ENCODE measurements at regions of chr12 and their contacts with region 1.

Region 1: DNA sequence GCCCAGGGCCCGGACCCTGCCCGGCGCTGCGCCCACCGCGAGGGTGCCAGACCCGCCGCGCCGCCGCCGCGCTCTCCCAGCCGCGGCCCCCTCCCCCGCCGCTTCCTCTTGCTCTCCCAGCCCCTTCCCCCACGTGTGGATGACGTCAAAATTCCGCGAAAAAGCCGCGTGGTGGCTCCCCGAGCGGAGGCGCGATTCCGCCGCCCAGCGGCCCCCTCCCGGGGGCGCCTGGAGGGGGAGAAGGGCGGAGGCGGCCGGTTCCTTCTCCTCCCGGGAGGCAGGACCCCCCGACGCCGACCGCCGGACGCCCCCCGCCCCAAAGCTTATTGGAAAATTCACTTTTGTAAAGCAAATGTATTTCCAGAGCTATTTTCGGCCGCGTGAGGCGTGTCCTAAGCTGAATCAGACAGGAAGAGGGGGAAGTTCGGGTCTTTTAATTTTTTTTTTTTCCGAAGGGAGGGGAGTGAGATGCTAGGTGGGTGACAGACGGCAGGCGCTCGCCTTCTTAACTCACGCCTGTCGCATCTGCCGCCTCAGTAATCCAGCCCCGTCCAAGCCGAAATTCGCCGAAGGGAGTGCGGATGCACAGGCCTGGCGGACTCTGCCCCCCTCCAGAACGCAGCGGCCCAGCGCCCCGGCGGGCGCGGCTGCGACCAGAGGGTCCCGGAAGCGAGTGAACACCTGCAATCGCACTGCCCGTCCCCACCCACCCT is 4.1 kb upstream of the CCND2 start:
- DNase-seq: peak; percentile 96
- ATAC-seq: peak; percentile 42
- H3K4me3 ChIP-seq: peak overlapping the region; percentile 64 to 90 (median 77)
- H3K4me3 Mint-ChIP-seq: peak overlapping the region; percentile 99
- H3K27ac ChIP-seq: peak overlapping the region; percentile 97 to 99
- H3K27ac Mint-ChIP-seq: peak overlapping the region; percentile 99
- H3K4me1 ChIP-seq: peaks cover 19 to 39% of the 10 kb centered on the region in 2 donors
- H3K4me1 Mint-ChIP-seq: peaks cover 28% of the 10 kb centered on the region
- H3K27me3 ChIP-seq: no peaks in the 10 kb centered on the region
- H3K27me3 Mint-ChIP-seq: no peaks in the 10 kb centered on the region
- CTCF ChIP-seq: no peak

Region 2: DNA sequence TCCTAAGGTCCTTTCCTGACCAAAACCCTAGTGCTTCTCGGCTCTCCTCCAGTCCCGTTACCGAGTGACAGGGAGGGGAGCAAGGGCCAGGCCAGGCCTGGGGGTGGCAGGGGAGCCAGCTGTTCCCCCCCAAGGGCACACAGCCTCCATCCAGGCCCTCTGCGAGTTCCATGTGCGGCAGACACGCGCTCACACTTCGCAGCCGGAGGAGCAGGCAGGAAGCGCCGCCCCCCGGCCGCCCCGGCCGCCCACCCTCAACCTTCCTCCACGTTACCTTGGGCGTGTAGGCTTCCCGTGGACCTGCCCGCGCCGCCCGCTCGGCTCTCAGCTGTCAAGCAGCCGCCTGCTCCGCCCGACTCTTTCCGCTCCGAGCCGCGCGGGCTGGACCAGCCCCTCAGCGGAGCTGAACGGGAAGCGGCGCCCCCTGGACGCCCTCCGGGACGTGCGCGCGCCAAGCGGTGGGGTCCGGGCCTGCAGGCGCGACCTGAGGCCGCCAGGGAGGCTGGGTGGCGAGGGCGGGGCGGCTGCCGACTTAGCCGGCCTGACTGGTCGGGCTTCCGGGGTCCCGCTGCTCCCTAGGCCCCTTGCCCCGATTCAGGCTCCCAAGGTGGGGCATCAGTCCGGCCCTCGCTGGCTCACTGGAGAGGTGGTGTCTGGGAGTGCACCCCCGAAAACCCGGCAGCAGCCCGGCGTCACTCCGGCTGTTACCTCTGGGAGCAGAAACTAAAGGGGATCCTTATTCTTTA is 516.5 kb before region 1 on chr12 and contains the start of gene CRACR2A:
- CTCF ChIA-PET with region 1: no interaction called
- POLR2A ChIA-PET with region 1: no interaction called
- intact Hi-C with region 1: loop called (anchors 5 kb)
- DNase-seq: peak; percentile 89
- ATAC-seq: peak; percentile 88
- H3K4me3 ChIP-seq: peak within 1 kb of the TSS; percentile 68 to 98 (median 82)
- H3K4me3 Mint-ChIP-seq: peak within 1 kb of the TSS; percentile 92
- H3K27ac ChIP-seq: peak within 1 kb of the TSS; percentile 92 to 95
- H3K27ac Mint-ChIP-seq: peak within 1 kb of the TSS; percentile 91
- H3K4me1 ChIP-seq: peaks cover 20 to 29% of the 10 kb centered on the region in 2 donors
- H3K4me1 Mint-ChIP-seq: peaks cover 34% of the 10 kb centered on the region
- H3K27me3 ChIP-seq: no peaks in the 10 kb centered on the region
- H3K27me3 Mint-ChIP-seq: no peaks in the 10 kb centered on the region
- CTCF ChIP-seq: peak; percentile 86
- total RNA-seq, gene CRACR2A: 26.1 and 26.8 TPM in 2 replicates

Region 3: GRCh38 chr12:3998968-3999826 is 270.2 kb before region 1 on chr12:
- CTCF ChIA-PET with region 1: interaction called, 293 read pairs
- POLR2A ChIA-PET with region 1: interaction called, 5 read pairs
- intact Hi-C with region 1: no loop called
- DNase-seq: no peak
- ATAC-seq: no peak
- H3K4me3 ChIP-seq: no peak overlapping the region
- H3K4me3 Mint-ChIP-seq: no peak overlapping the region
- H3K27ac ChIP-seq: no peak overlapping the region
- H3K27ac Mint-ChIP-seq: no peak overlapping the region
- H3K4me1 ChIP-seq: peaks cover 4 to 7% of the 10 kb centered on the region in 2 donors
- H3K4me1 Mint-ChIP-seq: peaks cover 4% of the 10 kb centered on the region
- H3K27me3 ChIP-seq: peaks cover 0 to 3% (median under 1%) of the 10 kb centered on the region in 4 experiments
- H3K27me3 Mint-ChIP-seq: peaks cover 4% of the 10 kb centered on the region
- CTCF ChIP-seq: no peak

Region 4: GRCh38 chr12:4118017-4118510 is 151.4 kb before region 1 on chr12:
- CTCF ChIA-PET with region 1: interaction called, 42 read pairs
- POLR2A ChIA-PET with region 1: interaction called, 28 read pairs
- intact Hi-C with region 1: loop called (anchors 1 kb)
- DNase-seq: peak; percentile 90
- ATAC-seq: peak; percentile 90
- H3K4me3 ChIP-seq: peak overlapping the region in 3 of 5 experiments; percentile 21 to 56 (median 34)
- H3K4me3 Mint-ChIP-seq: peak overlapping the region; percentile 78
- H3K27ac ChIP-seq: peak overlapping the region; percentile 47 to 59
- H3K27ac Mint-ChIP-seq: peak overlapping the region; percentile 85
- H3K4me1 ChIP-seq: peaks cover 49 to 51% of the 10 kb centered on the region in 2 donors
- H3K4me1 Mint-ChIP-seq: peaks cover 54% of the 10 kb centered on the region
- H3K27me3 ChIP-seq: peaks cover 0 to 1% (median 0%) of the 10 kb centered on the region in 4 experiments
- H3K27me3 Mint-ChIP-seq: no peaks in the 10 kb centered on the region
- CTCF ChIP-seq: no peak

Region 5: DNA sequence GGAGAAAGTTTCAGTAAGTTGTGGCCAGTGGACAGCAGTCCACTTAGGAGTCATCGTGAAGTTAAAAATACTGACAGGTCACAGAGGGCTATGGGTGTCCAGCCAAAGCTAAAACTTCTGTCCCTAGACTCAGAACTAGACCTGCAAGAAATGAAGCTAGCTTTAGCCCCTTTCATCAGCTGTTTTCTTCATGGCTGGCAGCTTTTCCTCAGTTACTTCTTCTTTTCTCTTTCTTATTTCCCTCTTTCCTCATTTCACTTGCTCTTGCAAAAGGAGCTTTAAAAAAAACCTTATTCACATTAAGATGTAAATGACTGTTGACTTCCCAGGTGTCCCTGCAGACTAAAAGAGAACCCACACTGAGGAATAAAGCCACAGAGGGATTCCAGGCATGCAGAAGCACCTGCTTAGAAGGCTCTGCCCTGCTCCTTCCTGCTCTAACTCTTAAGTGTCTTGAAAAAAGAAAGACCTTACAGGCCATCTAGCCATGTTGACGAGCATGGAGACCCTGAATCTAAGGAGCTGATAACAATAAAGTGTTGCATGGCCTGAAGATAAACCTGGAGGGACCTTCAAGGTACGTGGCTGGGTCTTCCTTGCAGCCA is 65.6 kb before region 1 on chr12:
- CTCF ChIA-PET with region 1: interaction called, 3 read pairs
- POLR2A ChIA-PET with region 1: interaction called, 8 read pairs
- intact Hi-C with region 1: loop called (anchors 5 kb)
- DNase-seq: peak; percentile 50
- ATAC-seq: no peak
- H3K4me3 ChIP-seq: no peak overlapping the region
- H3K4me3 Mint-ChIP-seq: peak overlapping the region; percentile 50
- H3K27ac ChIP-seq: no peak overlapping the region
- H3K27ac Mint-ChIP-seq: peak overlapping the region; percentile 53
- H3K4me1 ChIP-seq: peaks cover 52 to 54% of the 10 kb centered on the region in 2 donors
- H3K4me1 Mint-ChIP-seq: peaks cover 58% of the 10 kb centered on the region
- H3K27me3 ChIP-seq: no peaks in the 10 kb centered on the region
- H3K27me3 Mint-ChIP-seq: no peaks in the 10 kb centered on the region
- CTCF ChIP-seq: no peak

Region 6: GRCh38 chr12:4215229-4216186 is 53.9 kb before region 1 on chr12:
- CTCF ChIA-PET with region 1: interaction called, 15 read pairs
- POLR2A ChIA-PET with region 1: interaction called, 7 read pairs
- intact Hi-C with region 1: loop called (anchors 1 kb)
- DNase-seq: peak; percentile 91
- ATAC-seq: peak; percentile 90
- H3K4me3 ChIP-seq: peak overlapping the region; percentile 28 to 53 (median 34)
- H3K4me3 Mint-ChIP-seq: peak overlapping the region; percentile 87
- H3K27ac ChIP-seq: peak overlapping the region; percentile 89 to 94
- H3K27ac Mint-ChIP-seq: peak overlapping the region; percentile 94
- H3K4me1 ChIP-seq: peaks cover 32 to 41% of the 10 kb centered on the region in 2 donors
- H3K4me1 Mint-ChIP-seq: peaks cover 41% of the 10 kb centered on the region
- H3K27me3 ChIP-seq: no peaks in the 10 kb centered on the region
- H3K27me3 Mint-ChIP-seq: no peaks in the 10 kb centered on the region
- CTCF ChIP-seq: no peak

Region 7: GRCh38 chr12:4293966-4294505 is 24.6 kb after region 1 on chr12:
- CTCF ChIA-PET with region 1: no interaction called
- POLR2A ChIA-PET with region 1: no interaction called
- intact Hi-C with region 1: no loop called
- DNase-seq: no peak
- ATAC-seq: no peak
- H3K4me3 ChIP-seq: no peak overlapping the region
- H3K4me3 Mint-ChIP-seq: no peak overlapping the region
- H3K27ac ChIP-seq: no peak overlapping the region
- H3K27ac Mint-ChIP-seq: peak overlapping the region; percentile 64
- H3K4me1 ChIP-seq: peaks cover 5 to 10% of the 10 kb centered on the region in 2 donors
- H3K4me1 Mint-ChIP-seq: peaks cover 7% of the 10 kb centered on the region
- H3K27me3 ChIP-seq: no peaks in the 10 kb centered on the region
- H3K27me3 Mint-ChIP-seq: no peaks in the 10 kb centered on the region
- CTCF ChIP-seq: no peak